Caco-2 (cell line): ENCODE measurements at regions of chr2 and their contacts with region 1.

Region 1: DNA sequence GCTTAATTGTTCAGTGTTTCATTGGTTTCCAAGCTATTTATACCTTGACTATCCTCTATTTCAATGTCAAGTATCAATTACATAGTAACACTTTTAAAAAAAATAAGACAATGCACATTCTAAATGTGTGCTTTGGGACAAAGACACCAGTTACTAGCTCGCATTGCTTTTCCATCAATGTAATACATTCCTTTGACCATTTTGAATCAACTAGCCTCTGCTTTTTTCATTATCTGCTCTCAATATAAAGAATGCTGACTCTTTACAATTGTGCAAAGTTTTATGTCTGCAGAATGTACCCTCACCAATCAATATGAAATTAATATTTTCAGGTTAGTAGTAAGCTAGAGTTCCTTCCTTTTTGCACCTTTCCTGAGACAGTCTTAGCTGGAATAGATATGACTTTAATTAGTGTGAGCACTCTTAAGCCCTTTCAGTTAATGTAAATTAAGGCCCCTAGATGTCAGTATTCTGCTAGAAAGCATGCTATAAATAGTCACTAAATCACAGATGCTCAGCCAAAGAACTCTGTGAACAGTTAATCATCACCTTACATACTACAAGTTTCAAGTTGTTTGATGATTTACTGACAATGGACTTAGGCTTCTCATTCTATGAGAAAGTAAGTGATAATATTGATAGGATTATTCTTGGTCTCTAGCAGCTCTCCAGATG is 413.6 kb downstream of the PTH2R start:
- DNase-seq: peak in 1 of 2 experiments; percentile 13
- H3K4me3 ChIP-seq: no peak overlapping the region
- H3K4me3 Mint-ChIP-seq: no peak overlapping the region
- H3K27ac Mint-ChIP-seq: no peak overlapping the region
- H3K4me1 ChIP-seq: no peaks in the 10 kb centered on the region
- H3K4me1 Mint-ChIP-seq: no peaks in the 10 kb centered on the region
- H3K27me3 ChIP-seq: no peaks in the 10 kb centered on the region
- H3K27me3 Mint-ChIP-seq: no peaks in the 10 kb centered on the region
- CTCF ChIP-seq: peak; percentile 27 to 39

Region 2: GRCh38 chr2:208638059-208638797 is 181.9 kb before region 1 on chr2:
- CTCF ChIA-PET with region 1: no interaction called
- POLR2A ChIA-PET with region 1: no interaction called
- intact Hi-C with region 1: loop called (anchors 5 kb)
- DNase-seq: peak; percentile 72 to 73
- H3K4me3 ChIP-seq: no peak overlapping the region
- H3K4me3 Mint-ChIP-seq: peak overlapping the region; percentile 34
- H3K27ac Mint-ChIP-seq: peak overlapping the region; percentile 58
- H3K4me1 ChIP-seq: peaks cover 14% of the 10 kb centered on the region
- H3K4me1 Mint-ChIP-seq: peaks cover 25% of the 10 kb centered on the region
- H3K27me3 ChIP-seq: no peaks in the 10 kb centered on the region
- H3K27me3 Mint-ChIP-seq: no peaks in the 10 kb centered on the region
- CTCF ChIP-seq: no peak

Region 3: GRCh38 chr2:208674919-208675318 is 145.2 kb before region 1 on chr2:
- CTCF ChIA-PET with region 1: no interaction called
- POLR2A ChIA-PET with region 1: no interaction called
- intact Hi-C with region 1: no loop called
- DNase-seq: no peak
- H3K4me3 ChIP-seq: no peak overlapping the region
- H3K4me3 Mint-ChIP-seq: no peak overlapping the region
- H3K27ac Mint-ChIP-seq: no peak overlapping the region
- H3K4me1 ChIP-seq: no peaks in the 10 kb centered on the region
- H3K4me1 Mint-ChIP-seq: no peaks in the 10 kb centered on the region
- H3K27me3 ChIP-seq: no peaks in the 10 kb centered on the region
- H3K27me3 Mint-ChIP-seq: no peaks in the 10 kb centered on the region
- CTCF ChIP-seq: no peak

Region 4: DNA sequence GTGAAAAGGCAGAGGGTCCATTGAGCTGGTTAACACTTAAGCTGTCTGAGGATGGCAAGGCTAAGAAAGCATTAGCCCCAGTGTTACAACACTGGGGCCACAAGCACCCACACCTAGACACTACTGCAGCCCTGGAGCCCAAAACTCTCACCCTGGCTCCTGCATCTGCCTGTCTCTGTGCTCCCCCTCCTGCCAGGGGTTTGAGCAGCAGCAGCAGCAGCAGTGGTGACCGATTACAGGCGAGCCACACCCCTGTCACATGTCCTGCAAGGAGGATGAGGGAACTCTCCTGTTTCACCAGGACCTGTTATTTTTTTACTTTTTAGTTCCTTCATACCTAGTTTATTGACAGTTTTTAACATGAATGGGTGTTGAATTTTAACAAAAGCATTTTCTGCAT is 277.0 kb after region 1 on chr2:
- CTCF ChIA-PET with region 1: no interaction called
- POLR2A ChIA-PET with region 1: no interaction called
- intact Hi-C with region 1: loop called (anchors 2 kb)
- DNase-seq: no peak
- H3K4me3 ChIP-seq: no peak overlapping the region
- H3K4me3 Mint-ChIP-seq: no peak overlapping the region
- H3K27ac Mint-ChIP-seq: no peak overlapping the region
- H3K4me1 ChIP-seq: no peaks in the 10 kb centered on the region
- H3K4me1 Mint-ChIP-seq: no peaks in the 10 kb centered on the region
- H3K27me3 ChIP-seq: no peaks in the 10 kb centered on the region; the same call in 1 of the 2 replicates
- H3K27me3 Mint-ChIP-seq: no peaks in the 10 kb centered on the region
- CTCF ChIP-seq: no peak